ENCODE measurements at regions of chr11 and their contacts with region 1.

Region 1: GRCh38 chr11:75241036-75241905 is 697 bp downstream of the TPBGL start:
- DNase-seq: peak; percentile 68 to 93 (median 76)
- H3K4me3 ChIP-seq: peak overlapping the region; percentile 40
- H3K27ac ChIP-seq: no peak overlapping the region
- H3K4me1 ChIP-seq: peaks cover 4% of the 10 kb centered on the region
- H3K27me3 ChIP-seq: no peaks in the 10 kb centered on the region
- CTCF ChIP-seq: peak; percentile 37 to 97 (median 93)
- EP300 ChIP-seq: no peak
- POLR2A ChIP-seq: peak; percentile 10

Region 2: GRCh38 chr11:74929431-74930363 is 311.6 kb before region 1 on chr11:
- intact Hi-C with region 1: loop called (anchors 5 kb)
- DNase-seq: peak; percentile 32 to 69 (median 46)
- H3K4me3 ChIP-seq: no peak overlapping the region
- H3K27ac ChIP-seq: no peak overlapping the region
- H3K4me1 ChIP-seq: no peaks in the 10 kb centered on the region
- H3K27me3 ChIP-seq: no peaks in the 10 kb centered on the region
- CTCF ChIP-seq: peak; percentile 55 to 69 (median 56)
- EP300 ChIP-seq: no peak
- POLR2A ChIP-seq: no peak

Region 3: DNA sequence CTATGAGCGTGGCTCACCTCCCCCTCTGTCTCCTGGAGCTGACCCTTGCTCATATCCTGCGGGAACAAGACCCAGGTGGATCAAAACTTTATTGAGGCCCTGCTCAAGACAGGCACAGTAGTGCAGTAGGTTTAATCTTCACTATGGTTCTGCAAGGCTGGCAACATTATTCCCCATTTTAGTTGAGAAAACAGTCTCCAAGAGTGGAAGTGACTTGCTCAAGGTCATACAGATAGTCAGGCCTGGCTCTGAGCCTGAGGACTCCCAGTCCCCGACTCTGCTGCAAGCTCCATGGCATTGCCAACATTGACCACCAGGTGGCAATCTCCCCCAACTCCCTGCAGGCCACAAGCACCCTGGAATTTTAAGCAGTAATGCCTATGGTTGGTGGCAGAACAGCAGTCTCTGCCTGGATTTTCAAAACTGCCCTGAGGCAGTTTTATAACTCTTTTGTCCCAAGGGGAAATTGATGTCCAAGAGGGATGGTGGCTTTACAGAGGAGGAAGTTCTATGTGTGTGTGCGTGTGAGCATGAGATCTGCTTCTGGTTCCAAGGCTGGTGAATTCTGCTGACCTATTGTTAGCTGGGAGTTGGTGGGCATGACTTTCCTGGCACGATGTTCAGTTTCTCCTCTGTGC is 218.4 kb before region 1 on chr11:
- intact Hi-C with region 1: loop called in 2 of 4 experiments (anchors 10 kb)
- DNase-seq: peak; percentile 36 to 71 (median 56)
- H3K4me3 ChIP-seq: no peak overlapping the region
- H3K27ac ChIP-seq: no peak overlapping the region
- H3K4me1 ChIP-seq: no peaks in the 10 kb centered on the region
- H3K27me3 ChIP-seq: no peaks in the 10 kb centered on the region
- CTCF ChIP-seq: peak in 2 of 3 donors; percentile 41 to 55
- EP300 ChIP-seq: no peak
- POLR2A ChIP-seq: no peak